Ovary (tissue), 10 donors: ENCODE measurements at regions of chr1 and their contacts with region 1.

Region 1: GRCh38 chr1:11858968-11859871 is 475 bp upstream of the NPPB start:
- DNase-seq: peak; percentile 68 to 89 (median 81)
- H3K4me3 ChIP-seq: no peak overlapping the region
- H3K27ac ChIP-seq: no peak overlapping the region
- H3K4me1 ChIP-seq: no peaks in the 10 kb centered on the region
- H3K27me3 ChIP-seq: no peaks in the 10 kb centered on the region
- CTCF ChIP-seq: no peak
- EP300 ChIP-seq: no peak
- POLR2A ChIP-seq: no peak

Region 2: GRCh38 chr1:12095452-12096263 is 236.4 kb after region 1 on chr1:
- intact Hi-C with region 1: loop called in 1 of 4 experiments (anchors 10 kb)
- DNase-seq: no peak
- H3K4me3 ChIP-seq: no peak overlapping the region
- H3K27ac ChIP-seq: no peak overlapping the region
- H3K4me1 ChIP-seq: no peaks in the 10 kb centered on the region
- H3K27me3 ChIP-seq: no peaks in the 10 kb centered on the region
- CTCF ChIP-seq: no peak
- EP300 ChIP-seq: no peak
- POLR2A ChIP-seq: no peak